Breast epithelium (tissue), 4 donors: ENCODE measurements at regions of chr13 and their contacts with region 1.

Region 1: DNA sequence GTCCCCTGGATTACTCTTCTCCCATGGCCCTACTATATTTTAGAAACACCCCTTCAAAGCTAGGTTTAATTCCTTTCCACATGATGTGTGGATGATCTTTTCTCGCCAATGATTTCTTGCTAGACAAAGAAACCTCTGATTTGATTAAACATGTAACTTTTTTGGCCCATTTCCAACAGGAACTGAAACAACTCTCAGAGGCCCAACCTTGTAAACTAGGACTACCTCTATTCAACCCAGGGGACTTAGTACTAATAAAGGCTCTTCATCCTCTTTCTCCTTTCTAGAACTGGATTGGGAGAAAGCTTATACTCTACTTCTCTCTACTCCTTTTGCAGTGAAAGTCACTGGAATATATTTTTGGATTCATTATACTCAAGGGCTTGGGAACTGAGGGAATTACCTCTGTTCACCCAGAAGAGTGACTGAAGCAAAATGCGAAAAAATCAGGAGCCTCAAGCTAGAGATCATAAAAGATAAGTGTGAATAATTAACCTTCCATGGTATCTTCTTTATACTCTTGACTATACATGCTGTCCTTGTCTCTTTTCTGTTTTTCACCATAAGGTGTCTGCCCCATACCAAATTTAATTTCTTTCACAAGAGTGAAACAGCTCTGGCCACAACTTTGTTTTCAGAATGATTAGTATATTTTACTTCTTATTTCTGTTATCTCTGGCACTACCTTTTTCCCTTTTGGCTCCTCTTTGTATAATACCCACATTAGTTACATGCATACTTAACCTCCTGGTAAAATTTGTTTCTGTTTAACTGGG is 977.6 kb downstream of the SLITRK5 start:
- DNase-seq: no peak
- H3K4me3 ChIP-seq: no peak overlapping the region
- H3K27ac ChIP-seq: no peak overlapping the region
- H3K4me1 ChIP-seq: no peaks in the 10 kb centered on the region
- H3K27me3 ChIP-seq: no peaks in the 10 kb centered on the region
- CTCF ChIP-seq: no peak
- POLR2A ChIP-seq: no peak

Region 2: GRCh38 chr13:89072979-89073378 is 424.2 kb after region 1 on chr13:
- intact Hi-C with region 1: loop called (anchors 10 kb)
- DNase-seq: no peak
- H3K4me3 ChIP-seq: no peak overlapping the region
- H3K27ac ChIP-seq: no peak overlapping the region
- H3K4me1 ChIP-seq: no peaks in the 10 kb centered on the region
- H3K27me3 ChIP-seq: no peaks in the 10 kb centered on the region
- CTCF ChIP-seq: no peak
- POLR2A ChIP-seq: no peak